ENCODE measurements at regions of chr15 and their contacts with region 1.

Region 1: GRCh38 chr15:67863442-67863987 is 23.7 kb upstream of the RNU6-1 start:
- DNase-seq: peak; percentile 90
- H3K4me3 Mint-ChIP-seq: peak overlapping the region; percentile 70
- H3K27ac Mint-ChIP-seq: no peak overlapping the region
- H3K4me1 Mint-ChIP-seq: peaks cover 3% of the 10 kb centered on the region
- H3K27me3 Mint-ChIP-seq: peaks cover 37% of the 10 kb centered on the region

Region 2: GRCh38 chr15:68154923-68155559 is 291.5 kb after region 1 on chr15:
- intact Hi-C with region 1: loop called (anchors 2 kb)
- DNase-seq: peak; percentile 63
- H3K4me3 Mint-ChIP-seq: no peak overlapping the region
- H3K27ac Mint-ChIP-seq: no peak overlapping the region
- H3K4me1 Mint-ChIP-seq: no peaks in the 10 kb centered on the region
- H3K27me3 Mint-ChIP-seq: no peaks in the 10 kb centered on the region

Region 3: GRCh38 chr15:68210821-68211655 is 347.5 kb after region 1 on chr15:
- intact Hi-C with region 1: loop called (anchors 1 kb)
- DNase-seq: peak; percentile 88
- H3K4me3 Mint-ChIP-seq: no peak overlapping the region
- H3K27ac Mint-ChIP-seq: peak overlapping the region; percentile 53
- H3K4me1 Mint-ChIP-seq: peaks cover 28% of the 10 kb centered on the region
- H3K27me3 Mint-ChIP-seq: no peaks in the 10 kb centered on the region